ENCODE measurements at regions of chr2 and their contacts with region 1.

Region 1: DNA sequence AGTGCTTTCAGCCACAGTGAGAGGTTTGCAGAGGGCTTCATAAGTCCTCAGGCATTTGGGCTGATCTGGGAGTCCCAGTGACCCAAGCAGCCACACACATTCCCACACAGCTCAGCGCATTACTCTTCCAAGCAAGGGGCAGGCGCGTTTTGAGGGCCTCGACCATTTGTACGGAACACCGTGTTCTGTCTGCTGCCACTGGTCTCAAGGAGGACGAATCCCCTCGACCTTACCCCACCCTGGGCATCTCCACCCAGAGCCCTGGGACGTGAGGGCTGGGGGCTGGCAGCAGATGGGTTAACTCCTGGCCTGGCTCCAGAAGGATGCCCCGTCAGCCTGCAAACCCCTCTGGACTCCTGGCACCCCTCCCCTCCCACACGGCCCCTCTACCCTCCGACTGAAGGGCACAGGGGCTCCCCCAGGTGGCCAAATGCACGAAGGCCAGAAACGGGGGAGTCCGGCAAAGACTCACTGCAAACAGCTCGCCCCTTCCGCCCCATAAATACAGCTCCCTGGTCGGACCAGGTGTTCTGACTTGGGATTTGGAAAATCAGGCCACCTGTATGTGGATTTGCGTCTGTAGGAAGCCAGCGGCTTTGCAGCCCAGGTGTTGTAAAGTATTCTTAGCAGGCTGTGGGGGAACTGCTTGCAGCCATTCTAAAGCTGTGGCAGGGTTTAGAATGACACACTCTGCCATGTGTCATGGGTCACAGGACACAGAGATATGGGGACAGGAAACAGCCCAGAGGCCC is 33.6 kb upstream of the PTMA start:
- DNase-seq: no peak
- H3K4me3 ChIP-seq: no peak overlapping the region
- H3K27me3 ChIP-seq: no peaks in the 10 kb centered on the region
- CTCF ChIP-seq: peak; percentile 97

Region 2: GRCh38 chr2:231621129-231621879 is 53.5 kb before region 1 on chr2:
- CTCF ChIA-PET with region 1: interaction called, 409 read pairs
- POLR2A ChIA-PET with region 1: no interaction called
- DNase-seq: no peak
- H3K4me3 ChIP-seq: no peak overlapping the region
- H3K27me3 ChIP-seq: no peaks in the 10 kb centered on the region; the same call in 1 of the 2 replicates
- CTCF ChIP-seq: no peak

Region 3: GRCh38 chr2:231655897-231656296 is 18.9 kb before region 1 on chr2:
- CTCF ChIA-PET with region 1: interaction called, 117 read pairs
- POLR2A ChIA-PET with region 1: no interaction called
- DNase-seq: no peak
- H3K4me3 ChIP-seq: no peak overlapping the region
- H3K27me3 ChIP-seq: no peaks in the 10 kb centered on the region
- CTCF ChIP-seq: no peak

Region 4: GRCh38 chr2:231696007-231696371 is 21.2 kb after region 1 on chr2:
- CTCF ChIA-PET with region 1: interaction called, 23 read pairs
- POLR2A ChIA-PET with region 1: no interaction called
- DNase-seq: peak; percentile 87
- H3K4me3 ChIP-seq: no peak overlapping the region
- H3K27me3 ChIP-seq: no peaks in the 10 kb centered on the region
- CTCF ChIP-seq: no peak

Region 5: DNA sequence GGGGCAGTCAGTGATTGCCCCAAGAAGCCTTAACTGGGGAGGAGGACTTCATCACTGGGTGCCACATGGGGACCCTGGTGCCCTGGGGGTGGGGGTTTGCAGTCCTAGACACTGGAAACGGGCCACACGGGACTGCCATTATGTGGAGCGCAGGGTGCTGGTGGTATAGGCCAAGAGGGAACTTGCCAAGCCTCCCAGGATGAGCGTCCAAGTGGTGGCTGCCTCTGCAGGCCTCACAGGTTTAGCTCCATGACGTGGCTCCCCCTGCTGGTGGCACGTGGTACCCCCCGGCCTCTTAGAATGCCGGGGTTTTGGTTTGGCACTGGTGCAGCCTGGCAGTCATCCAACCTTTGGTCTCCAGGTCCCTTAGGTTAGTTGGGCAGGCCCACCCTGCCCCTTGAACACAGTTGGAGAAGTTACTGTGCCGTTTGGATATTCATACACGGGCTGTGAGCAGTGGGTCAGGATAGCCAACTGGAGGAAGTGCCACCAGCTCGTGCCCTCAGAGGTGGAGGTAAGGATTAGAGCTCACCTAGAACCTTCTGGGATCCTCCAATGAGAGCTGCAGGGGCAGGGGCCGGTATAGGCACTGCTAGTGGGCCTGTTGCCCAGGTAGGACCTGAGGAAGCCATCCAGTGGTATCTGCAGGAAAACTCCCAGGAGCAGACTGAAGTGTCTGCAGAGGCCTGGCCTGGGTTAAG is 39.1 kb after region 1 on chr2:
- CTCF ChIA-PET with region 1: interaction called, 719 read pairs
- POLR2A ChIA-PET with region 1: interaction called, 15 read pairs
- DNase-seq: no peak
- H3K4me3 ChIP-seq: no peak overlapping the region
- H3K27me3 ChIP-seq: no peaks in the 10 kb centered on the region
- CTCF ChIP-seq: peak; percentile 94

Measured in BJ (cell line).